Activated CD4-positive, alpha-beta memory T cell treated with anti-CD3 and anti-CD28 coated beads, Interleukin-2, amount 10 ng/mL, durations not matched to agents 7 days and 5 days (primary cell): ENCODE measurements at regions of chr17 and their contacts with region 1.

Region 1: GRCh38 chr17:979538-980405 is at the start of gene NXN:
- DNase-seq: peak; percentile 88
- H3K4me3 Mint-ChIP-seq: peak within 1 kb of the TSS; percentile 67
- H3K27ac Mint-ChIP-seq: no peak within 1 kb of the TSS
- H3K4me1 Mint-ChIP-seq: peaks cover 16% of the 10 kb centered on the region
- H3K27me3 Mint-ChIP-seq: peaks cover 31% of the 10 kb centered on the region
- total RNA-seq, gene NXN: 0.23 to 0.30 TPM

Region 2: GRCh38 chr17:700504-701094 is 279.2 kb before region 1 on chr17:
- CTCF ChIA-PET with region 1: interaction called, 11 read pairs
- POLR2A ChIA-PET with region 1: no interaction called
- DNase-seq: no peak
- H3K4me3 Mint-ChIP-seq: no peak overlapping the region
- H3K27ac Mint-ChIP-seq: no peak overlapping the region
- H3K4me1 Mint-ChIP-seq: no peaks in the 10 kb centered on the region
- H3K27me3 Mint-ChIP-seq: no peaks in the 10 kb centered on the region

Region 3: DNA sequence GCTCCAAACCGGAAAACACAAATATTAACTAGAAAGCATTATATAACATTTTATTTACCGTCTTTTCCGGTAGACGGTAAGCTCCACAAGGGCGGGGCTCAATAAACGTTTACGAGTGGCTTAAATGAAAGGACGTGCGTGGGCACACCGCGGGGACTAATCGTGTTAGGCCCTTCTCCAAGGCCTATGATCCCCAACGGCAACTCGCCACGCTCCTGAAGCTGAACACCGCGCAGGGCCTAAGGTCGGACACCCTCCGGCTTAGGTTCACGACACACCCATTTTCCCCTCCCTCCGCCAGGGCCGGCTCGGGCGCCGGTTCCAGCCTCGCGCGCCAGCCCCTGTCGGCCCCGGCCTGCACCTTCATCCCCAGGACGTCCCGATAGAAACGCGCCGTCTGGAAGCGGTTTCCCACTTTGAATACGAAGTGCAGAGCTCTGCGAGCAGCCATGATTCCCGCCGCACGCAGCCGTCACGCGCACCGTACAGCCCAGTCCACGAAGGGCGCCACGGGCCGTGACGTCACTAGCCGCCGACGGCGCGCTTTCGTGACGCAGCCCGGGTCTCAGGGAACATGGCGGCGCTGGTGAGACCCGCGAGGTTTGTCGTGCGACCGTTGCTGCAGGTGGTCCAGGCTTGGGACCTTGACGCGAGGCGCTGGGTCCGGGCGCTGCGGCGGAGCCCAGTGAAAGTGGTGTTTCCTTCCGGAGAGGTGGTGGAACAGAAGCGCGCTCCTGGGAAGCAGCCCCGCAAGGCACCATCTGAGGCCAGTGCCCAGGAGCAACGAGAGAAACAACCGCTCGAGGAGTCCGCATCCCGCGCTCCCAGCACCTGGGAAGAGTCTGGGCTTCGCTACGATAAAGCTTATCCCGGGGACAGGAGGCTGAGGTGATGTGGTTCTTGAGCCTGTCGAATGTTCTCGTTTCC is 197.7 kb before region 1 on chr17 and contains the starts of genes GLOD4 and MRM3:
- CTCF ChIA-PET with region 1: interaction called, 27 read pairs
- POLR2A ChIA-PET with region 1: interaction called, 10 read pairs
- DNase-seq: peak; percentile 96
- H3K4me3 Mint-ChIP-seq: peak within 1 kb of the TSS; percentile 93
- H3K27ac Mint-ChIP-seq: peak within 1 kb of the TSS; percentile 83
- H3K4me1 Mint-ChIP-seq: peaks cover 36% of the 10 kb centered on the region
- H3K27me3 Mint-ChIP-seq: no peaks in the 10 kb centered on the region
- total RNA-seq, gene GLOD4: 46.0 to 54.1 TPM
- total RNA-seq, gene MRM3: 12.8 to 15.8 TPM

Region 4: GRCh38 chr17:794876-795275 is 184.9 kb before region 1 on chr17:
- CTCF ChIA-PET with region 1: interaction called, 42 read pairs
- POLR2A ChIA-PET with region 1: interaction called, 10 read pairs
- DNase-seq: peak; percentile 49
- H3K4me3 Mint-ChIP-seq: no peak overlapping the region
- H3K27ac Mint-ChIP-seq: no peak overlapping the region
- H3K4me1 Mint-ChIP-seq: peaks cover 6% of the 10 kb centered on the region
- H3K27me3 Mint-ChIP-seq: no peaks in the 10 kb centered on the region

Region 5: DNA sequence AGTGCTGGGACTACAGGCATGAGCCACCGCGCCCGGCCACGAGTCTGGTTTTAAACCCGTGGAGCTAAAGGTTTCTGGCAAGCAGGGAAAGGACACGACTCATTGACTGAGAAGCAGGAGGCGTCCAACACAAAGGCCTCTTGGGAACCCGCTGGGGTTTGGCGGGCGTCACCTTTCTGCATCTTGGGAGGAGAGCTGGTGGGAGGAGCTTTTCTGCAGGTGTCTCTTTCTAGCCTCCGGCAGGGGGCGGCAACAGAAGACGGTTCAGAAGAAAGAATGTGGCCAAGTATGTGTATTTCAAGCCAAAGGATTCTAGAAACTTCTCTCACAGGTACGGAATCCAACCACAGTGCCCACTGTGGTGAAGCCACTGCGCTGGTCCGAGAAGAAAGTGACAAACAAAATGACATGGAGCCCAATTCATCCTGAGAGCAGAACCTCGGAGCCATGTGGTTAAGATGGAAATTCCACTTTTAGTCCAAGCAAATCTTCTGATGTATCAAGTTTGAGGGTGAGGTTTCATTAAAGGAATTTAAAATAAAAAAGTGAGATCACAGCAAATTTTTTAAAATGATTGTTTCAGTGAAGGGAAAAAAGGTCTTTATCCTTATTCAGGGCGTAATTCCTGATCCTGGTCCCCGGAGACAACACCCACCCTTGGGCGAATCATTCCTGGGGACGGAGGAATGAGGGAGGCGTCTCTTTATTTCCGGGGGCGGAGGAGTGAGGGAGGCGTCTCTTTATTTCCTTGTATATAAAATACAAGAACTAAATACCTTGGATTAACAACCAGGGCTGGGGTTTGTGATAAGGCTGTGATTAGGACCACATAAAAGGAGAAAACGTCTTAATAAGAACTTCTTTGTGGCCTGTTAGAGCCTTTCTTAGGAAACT is 100.0 kb before region 1 on chr17:
- CTCF ChIA-PET with region 1: interaction called, 18 read pairs
- POLR2A ChIA-PET with region 1: interaction called, 4 read pairs
- DNase-seq: peak; percentile 70
- H3K4me3 Mint-ChIP-seq: no peak overlapping the region
- H3K27ac Mint-ChIP-seq: no peak overlapping the region
- H3K4me1 Mint-ChIP-seq: peaks cover 12% of the 10 kb centered on the region
- H3K27me3 Mint-ChIP-seq: peaks cover 16% of the 10 kb centered on the region

Region 6: GRCh38 chr17:996554-997344 is 17.0 kb after region 1 on chr17 and contains the start of gene TIMM22:
- CTCF ChIA-PET with region 1: interaction called, 27 read pairs
- POLR2A ChIA-PET with region 1: interaction called, 16 read pairs
- DNase-seq: peak; percentile 94
- H3K4me3 Mint-ChIP-seq: peak within 1 kb of the TSS; percentile 91
- H3K27ac Mint-ChIP-seq: peak within 1 kb of the TSS; percentile 83
- H3K4me1 Mint-ChIP-seq: peaks cover 25% of the 10 kb centered on the region
- H3K27me3 Mint-ChIP-seq: no peaks in the 10 kb centered on the region
- total RNA-seq, gene TIMM22: 8.1 to 8.2 TPM